H1 (cell line): ENCODE measurements at regions of chr15 and their contacts with region 1.

Region 1: GRCh38 chr15:82959423-82960104 is 7.0 kb upstream of the HOMER2 start:
- DNase-seq: no peak
- H3K4me3 ChIP-seq: no peak overlapping the region
- H3K27ac ChIP-seq: no peak overlapping the region
- H3K4me1 ChIP-seq: peaks cover 0 to 11% (median 6%) of the 10 kb centered on the region in 4 experiments; a peak in 4 of 7 replicates
- H3K27me3 ChIP-seq: no peaks in the 10 kb centered on the region; a peak in 1 of 7 replicates
- CTCF ChIP-seq: no peak
- EP300 ChIP-seq: no peak
- POLR2A ChIP-seq: no peak
- RAD21 ChIP-seq: no peak; a peak in 1 of 4 replicates

Region 2: GRCh38 chr15:82812994-82813393 is 146.6 kb before region 1 on chr15:
- CTCF ChIA-PET with region 1: no interaction called
- POLR2A ChIA-PET with region 1: no interaction called
- DNase-seq: no peak
- H3K4me3 ChIP-seq: no peak overlapping the region
- H3K27ac ChIP-seq: no peak overlapping the region
- H3K4me1 ChIP-seq: peaks cover 0 to 6% (median 0%) of the 10 kb centered on the region in 4 experiments; a peak in 2 of 7 replicates
- H3K27me3 ChIP-seq: no peaks in the 10 kb centered on the region
- CTCF ChIP-seq: no peak
- EP300 ChIP-seq: no peak
- POLR2A ChIP-seq: no peak
- RAD21 ChIP-seq: no peak

Region 3: DNA sequence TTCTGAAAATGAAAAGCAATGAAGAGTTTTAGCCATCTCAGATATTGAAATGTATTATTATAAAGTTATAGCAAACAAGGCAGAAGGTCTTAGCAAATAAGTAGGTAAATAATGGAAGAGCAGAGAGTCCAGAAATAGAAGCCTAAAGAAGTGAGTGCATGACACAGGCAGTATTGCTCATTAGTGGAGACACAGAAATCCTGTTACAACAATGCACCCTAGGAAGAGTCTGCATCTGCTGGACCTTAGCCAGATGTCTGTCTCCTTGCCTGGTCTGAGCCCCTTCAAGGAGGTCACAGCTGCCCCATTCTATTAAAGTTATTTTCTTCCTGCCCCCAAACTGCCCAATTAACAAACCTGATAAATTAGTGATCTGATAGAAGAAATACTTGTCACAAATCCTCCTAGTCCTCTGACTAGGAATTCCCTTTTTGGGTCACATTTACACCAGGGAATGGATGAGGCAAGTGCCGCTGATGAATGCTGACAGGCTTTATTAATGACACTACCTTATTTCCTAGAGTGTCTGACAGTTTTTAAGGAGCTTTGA is 59.0 kb before region 1 on chr15:
- CTCF ChIA-PET with region 1: no interaction called
- POLR2A ChIA-PET with region 1: no interaction called
- DNase-seq: no peak
- H3K4me3 ChIP-seq: no peak overlapping the region
- H3K27ac ChIP-seq: no peak overlapping the region
- H3K4me1 ChIP-seq: peaks cover 0 to 2% (median under 1%) of the 10 kb centered on the region in 4 experiments; a peak in 3 of 7 replicates
- H3K27me3 ChIP-seq: no peaks in the 10 kb centered on the region; a peak in 2 of 7 replicates
- CTCF ChIP-seq: no peak
- EP300 ChIP-seq: no peak
- POLR2A ChIP-seq: no peak
- RAD21 ChIP-seq: no peak

Region 4: DNA sequence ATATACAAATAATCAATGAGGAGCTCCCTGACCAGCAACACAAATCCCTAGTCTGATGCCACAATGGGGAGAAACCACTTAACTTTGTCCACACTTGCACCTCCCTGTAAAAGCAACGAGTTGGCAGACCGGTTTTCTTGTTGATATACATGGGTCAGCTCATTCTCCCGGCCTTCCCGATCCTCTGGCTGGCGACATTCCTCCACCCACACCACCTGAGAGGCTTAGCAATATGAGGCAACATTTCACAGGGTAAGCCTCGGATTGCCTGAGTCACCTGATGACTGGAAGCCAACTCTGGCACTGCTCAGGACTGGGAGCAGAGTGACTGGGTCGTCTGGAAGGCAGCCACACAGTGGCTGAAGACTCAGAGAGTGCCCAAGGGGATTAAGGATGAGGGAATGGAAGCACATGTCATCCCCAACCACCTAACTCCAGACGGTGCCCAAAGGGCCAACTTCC is 16.9 kb before region 1 on chr15:
- CTCF ChIA-PET with region 1: interaction called, 11 read pairs
- POLR2A ChIA-PET with region 1: interaction called, 3 read pairs
- DNase-seq: no peak
- H3K4me3 ChIP-seq: no peak overlapping the region
- H3K27ac ChIP-seq: no peak overlapping the region
- H3K4me1 ChIP-seq: no peaks in the 10 kb centered on the region
- H3K27me3 ChIP-seq: no peaks in the 10 kb centered on the region
- CTCF ChIP-seq: no peak
- EP300 ChIP-seq: no peak
- POLR2A ChIP-seq: no peak
- RAD21 ChIP-seq: no peak

Region 5: DNA sequence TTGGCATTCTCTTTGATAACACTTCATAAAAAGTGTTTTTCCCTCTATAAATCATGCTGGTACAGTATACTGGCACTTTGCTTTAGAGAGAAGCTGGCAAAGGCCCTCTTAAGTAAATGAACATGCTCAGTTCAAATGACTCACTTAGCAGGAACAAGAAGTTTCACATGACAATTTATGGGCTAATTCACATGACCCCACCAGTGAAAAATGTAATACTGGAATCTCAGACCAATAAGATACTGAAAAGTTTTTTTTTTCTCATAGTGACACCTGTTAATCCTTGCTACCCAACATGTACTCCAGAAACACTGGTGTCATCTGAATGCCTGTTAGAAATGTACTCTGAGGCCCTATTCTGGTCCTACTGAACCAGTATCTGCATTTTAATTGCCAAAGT is 93.6 kb after region 1 on chr15:
- CTCF ChIA-PET with region 1: no interaction called
- POLR2A ChIA-PET with region 1: no interaction called
- DNase-seq: no peak
- H3K4me3 ChIP-seq: no peak overlapping the region
- H3K27ac ChIP-seq: no peak overlapping the region
- H3K4me1 ChIP-seq: peaks cover 0 to 6% (median 3%) of the 10 kb centered on the region in 4 experiments; a peak in 2 of 7 replicates
- H3K27me3 ChIP-seq: no peaks in the 10 kb centered on the region
- CTCF ChIP-seq: no peak
- EP300 ChIP-seq: no peak
- POLR2A ChIP-seq: no peak
- RAD21 ChIP-seq: no peak